ENCODE measurements at regions of chr1 and their contacts with region 1.

Region 1: GRCh38 chr1:32716312-32717148 is 14.0 kb upstream of the SYNC start:
- DNase-seq: peak in 4 of 5 donors; percentile 18 to 28 (median 24)
- H3K4me3 ChIP-seq: no peak overlapping the region
- H3K4me3 Mint-ChIP-seq: peak overlapping the region in 2 of 8 donors; percentile 35 to 45
- H3K27ac ChIP-seq: no peak overlapping the region
- H3K27ac Mint-ChIP-seq: peak overlapping the region in 1 of 7 donors; percentile 36
- H3K4me1 ChIP-seq: peaks cover 15% of the 10 kb centered on the region
- H3K4me1 Mint-ChIP-seq: peaks cover 3 to 17% (median 7%) of the 10 kb centered on the region in 4 donors
- H3K27me3 ChIP-seq: no peaks in the 10 kb centered on the region
- H3K27me3 Mint-ChIP-seq: peaks cover 0 to 2% of the 10 kb centered on the region in 2 donors

Region 2: DNA sequence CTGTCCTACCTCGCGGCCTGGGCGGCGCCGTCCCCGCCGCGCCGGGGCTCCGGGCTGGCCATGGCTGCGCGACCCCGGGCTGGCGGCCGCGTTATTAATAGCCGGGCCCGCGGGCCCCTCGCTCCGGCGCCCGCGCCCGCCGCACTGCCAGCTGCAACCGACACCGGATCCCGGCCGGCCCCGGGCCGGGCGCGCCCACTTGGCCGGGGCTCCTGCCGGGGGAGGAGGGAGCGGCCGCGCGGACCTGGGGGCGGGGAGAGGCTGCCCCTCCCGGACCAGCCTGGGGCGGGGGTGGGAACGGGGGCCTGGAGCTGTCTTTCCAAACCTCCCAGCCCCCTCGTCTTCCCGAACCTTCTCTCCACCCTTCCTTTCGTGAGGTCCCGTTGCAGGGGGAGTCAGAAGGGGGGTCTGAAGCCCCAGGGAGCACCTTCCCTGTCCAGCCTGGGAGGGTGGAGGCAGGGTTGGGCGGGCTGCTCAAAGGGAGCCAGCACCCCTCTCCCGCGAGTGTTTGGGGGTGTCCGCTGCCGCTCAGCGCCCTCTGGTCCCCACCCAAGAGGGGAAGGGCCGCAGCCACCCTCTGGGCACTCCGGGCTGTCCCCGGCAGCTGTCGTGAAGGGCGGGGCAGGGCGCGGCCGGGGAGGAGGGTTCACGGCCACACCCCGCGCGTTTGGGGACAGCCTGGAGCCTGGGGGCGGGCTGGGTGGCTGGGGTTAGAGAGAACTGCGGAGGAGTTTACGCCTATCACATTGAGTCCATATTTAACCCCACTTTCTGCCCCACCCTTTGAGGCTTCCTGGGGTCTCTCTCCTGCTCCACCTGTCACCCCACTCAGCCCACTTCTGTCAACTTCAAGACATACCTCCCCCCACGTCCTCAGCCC is 13.7 kb before region 1 on chr1 and contains the start of gene SYNC:
- CTCF ChIA-PET with region 1: interaction called, 20 read pairs
- POLR2A ChIA-PET with region 1: no interaction called
- intact Hi-C with region 1: no loop called
- DNase-seq: peak in 1 of 5 donors; percentile 7
- H3K4me3 ChIP-seq: no peak within 1 kb of the TSS
- H3K4me3 Mint-ChIP-seq: peak within 1 kb of the TSS; percentile 48 to 78 (median 64)
- H3K27ac ChIP-seq: no peak within 1 kb of the TSS
- H3K27ac Mint-ChIP-seq: peak within 1 kb of the TSS in 1 of 7 donors; percentile 4
- H3K4me1 ChIP-seq: peaks cover 10% of the 10 kb centered on the region
- H3K4me1 Mint-ChIP-seq: peaks cover 8 to 14% (median 12%) of the 10 kb centered on the region in 4 donors
- H3K27me3 ChIP-seq: peaks cover 16% of the 10 kb centered on the region
- H3K27me3 Mint-ChIP-seq: peaks cover 22 to 34% of the 10 kb centered on the region in 2 donors
- total RNA-seq, gene SYNC: not detected

Region 3: GRCh38 chr1:32761253-32761880 is 44.8 kb after region 1 on chr1:
- CTCF ChIA-PET with region 1: interaction called, 10 read pairs
- POLR2A ChIA-PET with region 1: no interaction called
- intact Hi-C with region 1: no loop called
- DNase-seq: no peak
- H3K4me3 ChIP-seq: no peak overlapping the region
- H3K4me3 Mint-ChIP-seq: no peak overlapping the region
- H3K27ac ChIP-seq: no peak overlapping the region
- H3K27ac Mint-ChIP-seq: peak overlapping the region in 4 of 7 donors; percentile 11 to 74 (median 38)
- H3K4me1 ChIP-seq: peaks cover 8% of the 10 kb centered on the region
- H3K4me1 Mint-ChIP-seq: peaks cover 9 to 22% (median 15%) of the 10 kb centered on the region in 4 donors
- H3K27me3 ChIP-seq: no peaks in the 10 kb centered on the region
- H3K27me3 Mint-ChIP-seq: no peaks in the 10 kb centered on the region

Region 4: DNA sequence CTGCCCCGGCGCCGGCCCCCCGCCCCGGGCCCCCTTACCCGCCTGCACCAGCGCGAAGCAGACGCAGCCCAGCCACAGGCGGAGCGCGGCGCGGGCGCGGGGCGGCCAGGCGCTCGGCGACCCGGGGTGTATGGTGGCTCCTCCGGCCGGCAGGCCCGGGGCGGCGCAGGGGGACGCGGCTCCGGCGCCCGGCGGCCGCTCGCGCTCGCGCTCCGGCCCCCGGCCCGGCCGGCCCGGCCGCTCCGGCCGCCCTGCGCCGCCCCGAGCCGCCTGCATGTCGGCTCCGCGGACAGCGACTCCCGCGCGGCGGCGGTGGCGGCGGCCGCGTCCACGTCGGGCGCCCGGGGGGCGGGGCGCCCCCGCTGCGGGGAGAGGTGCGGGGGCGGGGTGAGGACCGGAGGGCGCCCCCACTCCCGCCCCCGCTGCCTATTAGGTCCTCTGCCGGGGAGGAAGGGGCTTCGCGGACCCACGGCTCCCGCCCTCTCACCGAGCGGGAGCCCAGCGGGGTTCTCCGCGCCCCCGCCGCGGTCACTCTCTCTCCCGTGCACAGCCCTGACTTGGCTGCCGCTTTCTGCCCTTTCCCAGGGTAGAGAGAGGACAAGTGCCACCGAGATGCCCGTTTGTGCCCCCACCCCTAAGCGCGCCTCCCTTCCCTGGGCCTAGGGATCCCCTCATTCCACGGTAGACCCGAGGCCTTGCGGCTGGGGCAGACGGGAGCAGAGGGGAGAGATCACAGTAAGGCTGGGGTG is 154.3 kb after region 1 on chr1 and contains the start of gene FNDC5:
- CTCF ChIA-PET with region 1: interaction called, 41 read pairs
- POLR2A ChIA-PET with region 1: no interaction called
- intact Hi-C with region 1: no loop called
- DNase-seq: no peak
- H3K4me3 ChIP-seq: no peak within 1 kb of the TSS
- H3K4me3 Mint-ChIP-seq: peak within 1 kb of the TSS; percentile 67 to 77 (median 76)
- H3K27ac ChIP-seq: no peak within 1 kb of the TSS
- H3K27ac Mint-ChIP-seq: peak within 1 kb of the TSS in 1 of 7 donors; percentile 42
- H3K4me1 ChIP-seq: peaks cover 4% of the 10 kb centered on the region
- H3K4me1 Mint-ChIP-seq: peaks cover 10 to 24% (median 17%) of the 10 kb centered on the region in 4 donors
- H3K27me3 ChIP-seq: peaks cover 12% of the 10 kb centered on the region
- H3K27me3 Mint-ChIP-seq: peaks cover 37 to 41% of the 10 kb centered on the region in 2 donors
- total RNA-seq, gene FNDC5: not detected

Region 5: DNA sequence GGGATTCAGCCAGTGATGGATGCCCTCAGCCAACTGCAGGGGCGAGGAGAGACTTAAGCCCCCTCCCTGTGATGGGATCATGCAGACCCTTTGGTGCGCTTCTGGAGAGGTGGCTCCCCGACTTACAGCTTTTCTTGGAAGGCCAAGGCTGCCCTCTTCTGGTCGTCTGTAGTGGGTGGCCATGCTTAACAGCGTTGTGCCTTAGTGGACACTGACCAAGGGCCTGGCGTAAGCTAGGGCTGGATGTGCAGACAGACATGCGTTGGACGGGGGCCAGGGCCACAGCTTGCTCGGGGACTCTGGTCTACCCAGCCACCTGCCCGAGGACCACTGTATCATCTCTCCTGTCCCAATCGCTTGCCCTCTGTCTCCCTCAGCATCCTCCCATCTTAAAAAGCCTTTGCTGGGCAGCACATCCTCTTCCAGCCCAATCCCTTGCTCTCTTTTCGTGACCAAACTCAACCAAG is 369.9 kb after region 1 on chr1:
- CTCF ChIA-PET with region 1: interaction called, 4 read pairs
- POLR2A ChIA-PET with region 1: no interaction called
- intact Hi-C with region 1: loop called (anchors 5 kb)
- DNase-seq: no peak
- H3K4me3 ChIP-seq: no peak overlapping the region
- H3K4me3 Mint-ChIP-seq: no peak overlapping the region
- H3K27ac ChIP-seq: no peak overlapping the region
- H3K27ac Mint-ChIP-seq: peak overlapping the region in 6 of 7 donors; percentile 6 to 56 (median 24)
- H3K4me1 ChIP-seq: peaks cover 35% of the 10 kb centered on the region
- H3K4me1 Mint-ChIP-seq: peaks cover 20 to 56% (median 40%) of the 10 kb centered on the region in 4 donors
- H3K27me3 ChIP-seq: no peaks in the 10 kb centered on the region
- H3K27me3 Mint-ChIP-seq: no peaks in the 10 kb centered on the region

Region 6: GRCh38 chr1:33244143-33244820 is 527.8 kb after region 1 on chr1:
- CTCF ChIA-PET with region 1: no interaction called
- POLR2A ChIA-PET with region 1: no interaction called
- intact Hi-C with region 1: no loop called
- DNase-seq: no peak
- H3K4me3 ChIP-seq: no peak overlapping the region
- H3K4me3 Mint-ChIP-seq: no peak overlapping the region
- H3K27ac ChIP-seq: no peak overlapping the region
- H3K27ac Mint-ChIP-seq: no peak overlapping the region
- H3K4me1 ChIP-seq: no peaks in the 10 kb centered on the region
- H3K4me1 Mint-ChIP-seq: no peaks in the 10 kb centered on the region
- H3K27me3 ChIP-seq: no peaks in the 10 kb centered on the region
- H3K27me3 Mint-ChIP-seq: peaks cover 16 to 18% of the 10 kb centered on the region in 2 donors